ENCODE measurements at regions of chr20 and their contacts with region 1.

Region 1: DNA sequence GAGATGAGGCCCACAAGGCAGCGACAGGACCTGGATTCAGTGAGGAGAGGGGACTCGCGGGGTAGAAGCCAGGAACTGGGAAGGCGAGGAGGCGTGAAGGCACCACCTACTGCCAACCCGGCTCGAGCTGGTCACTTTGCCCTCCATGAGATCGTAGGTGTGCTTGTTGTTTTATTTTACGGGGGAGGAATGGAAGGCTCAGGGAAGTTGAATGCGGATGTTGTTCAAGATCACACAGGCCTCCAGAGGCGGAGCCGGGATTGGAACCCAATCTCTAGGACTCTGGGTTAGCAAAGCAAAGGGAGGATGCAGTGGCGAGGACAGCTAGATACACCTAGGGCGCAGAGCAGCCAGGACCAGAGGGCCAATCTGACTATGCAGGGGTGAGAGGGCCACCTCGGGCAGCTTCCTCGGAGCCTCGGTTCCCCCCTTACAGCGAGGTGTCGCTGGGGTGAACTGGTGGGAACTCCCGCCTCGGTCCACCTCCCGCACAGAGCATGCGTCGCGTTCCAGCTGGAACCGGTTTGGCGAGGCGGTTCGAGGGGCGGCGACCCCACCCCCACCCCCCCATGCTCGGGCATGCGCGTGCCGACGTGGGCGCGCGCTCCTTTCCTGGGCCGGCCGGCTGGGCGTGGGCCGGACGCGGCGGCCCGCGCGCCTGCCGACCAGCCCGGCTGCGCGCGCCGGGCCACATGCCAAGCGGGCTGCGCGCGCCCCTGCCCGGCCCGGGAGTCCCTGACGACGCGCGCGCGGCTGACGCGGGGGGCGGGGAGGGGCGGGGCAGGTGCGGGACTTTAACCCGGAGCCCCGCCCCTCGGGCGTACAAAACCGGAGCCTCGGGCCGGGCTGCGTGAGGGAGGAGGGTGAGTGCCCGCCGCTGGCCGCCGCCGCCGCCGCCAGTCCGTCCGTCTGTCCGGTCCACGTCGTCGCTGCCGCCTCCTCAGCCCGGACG is 80.4 kb upstream of the MYL9 start:
- DNase-seq: peak; percentile 76 to 86
- H3K4me3 ChIP-seq: peak overlapping the region; percentile 43
- H3K27ac ChIP-seq: peak overlapping the region; percentile 27; the same call in 1 of the 2 replicates
- H3K4me1 ChIP-seq: peaks cover 39% of the 10 kb centered on the region
- H3K27me3 ChIP-seq: no peaks in the 10 kb centered on the region
- CTCF ChIP-seq: no peak

Region 2: DNA sequence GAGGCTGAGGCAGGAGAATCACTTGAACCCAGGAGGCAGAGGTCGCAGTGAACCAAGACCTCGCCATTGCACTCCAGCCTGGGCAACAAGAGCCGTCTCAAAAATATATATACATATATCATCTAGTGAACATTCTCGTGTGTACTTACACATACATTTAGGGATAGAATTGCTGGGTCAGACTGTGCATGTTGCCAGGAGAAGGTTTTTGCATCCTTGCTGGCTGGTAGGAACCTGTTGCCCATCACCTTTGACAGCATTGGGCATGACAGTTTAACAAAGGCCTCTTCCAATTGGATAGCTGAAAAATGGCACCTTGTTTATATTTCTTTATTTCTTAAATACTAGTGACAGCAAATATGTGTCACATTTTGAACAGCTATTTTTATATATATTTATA is 219.2 kb before region 1 on chr20:
- CTCF ChIA-PET with region 1: interaction called, 10 read pairs
- POLR2A ChIA-PET with region 1: no interaction called
- intact Hi-C with region 1: no loop called
- DNase-seq: no peak
- H3K4me3 ChIP-seq: no peak overlapping the region
- H3K27ac ChIP-seq: no peak overlapping the region
- H3K4me1 ChIP-seq: peaks cover 16% of the 10 kb centered on the region
- H3K27me3 ChIP-seq: no peaks in the 10 kb centered on the region
- CTCF ChIP-seq: no peak

Region 3: DNA sequence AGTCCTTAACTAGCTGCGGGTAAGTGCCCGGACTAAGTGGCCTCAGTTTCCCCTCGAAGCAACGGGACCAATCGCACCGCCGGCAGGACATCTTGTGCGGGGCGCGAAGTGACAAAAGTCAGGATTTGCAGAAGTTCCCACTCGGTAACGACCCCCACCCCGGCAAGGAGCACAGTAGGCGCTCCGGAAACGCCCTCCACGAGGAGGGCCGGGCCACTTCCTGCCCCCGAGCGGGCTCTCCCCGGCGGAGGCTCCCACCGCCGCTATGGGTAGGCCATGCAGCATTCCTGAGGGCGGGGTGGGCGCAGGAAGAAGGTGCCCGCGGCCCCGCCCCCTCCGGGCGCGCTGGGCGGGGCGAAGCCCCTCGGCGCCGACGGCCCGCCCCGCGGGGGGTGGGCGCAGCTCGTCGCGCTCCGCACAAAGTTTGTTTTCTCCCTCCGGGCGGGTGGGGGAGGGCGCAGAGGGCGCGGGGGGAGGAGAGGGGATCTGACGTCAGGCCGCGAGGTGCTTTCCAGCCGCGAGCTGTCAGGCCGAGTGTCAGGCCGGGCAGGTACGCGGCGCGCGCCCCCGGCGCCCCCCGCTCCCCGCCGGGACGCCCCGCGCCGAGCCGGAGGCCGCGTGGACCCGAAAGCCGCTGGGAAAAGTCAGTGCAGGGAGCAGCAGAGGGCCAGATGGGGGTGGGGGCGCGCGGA is 112.3 kb after region 1 on chr20 and contains the start of gene TGIF2:
- CTCF ChIA-PET with region 1: no interaction called
- POLR2A ChIA-PET with region 1: interaction called, 18 read pairs
- intact Hi-C with region 1: no loop called
- DNase-seq: peak; percentile 52 to 91
- H3K4me3 ChIP-seq: peak within 1 kb of the TSS; percentile 75
- H3K27ac ChIP-seq: no peak within 1 kb of the TSS
- H3K4me1 ChIP-seq: peaks cover 18% of the 10 kb centered on the region
- H3K27me3 ChIP-seq: no peaks in the 10 kb centered on the region
- CTCF ChIP-seq: no peak
- total RNA-seq, gene TGIF2: 15.7 and 18.3 TPM in 2 replicates